ENCODE measurements at regions of chr15 and their contacts with region 1.

Region 1: GRCh38 chr15:66386204-66387123 is at the start of gene MAP2K1:
- DNase-seq: peak; percentile 99
- ATAC-seq: peak; percentile 97
- H3K4me3 ChIP-seq: peak within 1 kb of the TSS; percentile 89
- H3K27ac ChIP-seq: peak within 1 kb of the TSS; percentile 91
- H3K4me1 ChIP-seq: peaks cover 42% of the 10 kb centered on the region
- H3K27me3 ChIP-seq: no peaks in the 10 kb centered on the region
- CTCF ChIP-seq: peak; percentile 74
- total RNA-seq, gene MAP2K1: 44.5 TPM

Region 2: DNA sequence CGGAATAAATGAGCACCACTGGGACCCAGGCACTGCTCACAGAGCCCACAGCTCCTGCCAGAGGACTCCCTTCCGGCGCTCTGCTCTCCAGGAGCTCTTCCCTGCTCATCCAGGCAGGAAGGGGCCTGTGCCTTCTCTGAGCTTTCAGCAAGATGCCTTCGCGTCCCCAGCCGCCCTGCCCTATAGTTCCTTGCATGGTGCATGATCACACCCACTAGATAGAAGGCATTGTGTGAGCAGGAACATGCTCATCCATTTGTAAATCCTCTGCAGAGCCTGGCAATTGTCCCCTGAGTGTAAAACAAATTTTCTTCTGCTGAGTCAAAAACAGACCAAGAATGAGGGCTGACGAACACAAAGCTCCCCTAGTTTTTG is 314.6 kb before region 1 on chr15:
- intact Hi-C with region 1: no loop called
- DNase-seq: no peak
- ATAC-seq: no peak
- H3K4me3 ChIP-seq: no peak overlapping the region
- H3K27ac ChIP-seq: no peak overlapping the region
- H3K4me1 ChIP-seq: no peaks in the 10 kb centered on the region
- H3K27me3 ChIP-seq: peaks cover 2% of the 10 kb centered on the region
- CTCF ChIP-seq: no peak

Region 3: GRCh38 chr15:66497502-66498455 is 111.3 kb after region 1 on chr15 and contains the start of gene SNAPC5:
- intact Hi-C with region 1: loop called (anchors 5 kb)
- DNase-seq: peak; percentile 99
- ATAC-seq: peak; percentile 99
- H3K4me3 ChIP-seq: peak within 1 kb of the TSS; percentile 84
- H3K27ac ChIP-seq: peak within 1 kb of the TSS; percentile 93
- H3K4me1 ChIP-seq: peaks cover 35% of the 10 kb centered on the region
- H3K27me3 ChIP-seq: no peaks in the 10 kb centered on the region
- CTCF ChIP-seq: peak; percentile 99
- total RNA-seq, gene SNAPC5: 29.9 TPM

Measured in upper lobe of right lung (tissue), 1 donor.